GM12878 (cell line): ENCODE measurements at regions of chr1 and their contacts with region 1.

Region 1: DNA sequence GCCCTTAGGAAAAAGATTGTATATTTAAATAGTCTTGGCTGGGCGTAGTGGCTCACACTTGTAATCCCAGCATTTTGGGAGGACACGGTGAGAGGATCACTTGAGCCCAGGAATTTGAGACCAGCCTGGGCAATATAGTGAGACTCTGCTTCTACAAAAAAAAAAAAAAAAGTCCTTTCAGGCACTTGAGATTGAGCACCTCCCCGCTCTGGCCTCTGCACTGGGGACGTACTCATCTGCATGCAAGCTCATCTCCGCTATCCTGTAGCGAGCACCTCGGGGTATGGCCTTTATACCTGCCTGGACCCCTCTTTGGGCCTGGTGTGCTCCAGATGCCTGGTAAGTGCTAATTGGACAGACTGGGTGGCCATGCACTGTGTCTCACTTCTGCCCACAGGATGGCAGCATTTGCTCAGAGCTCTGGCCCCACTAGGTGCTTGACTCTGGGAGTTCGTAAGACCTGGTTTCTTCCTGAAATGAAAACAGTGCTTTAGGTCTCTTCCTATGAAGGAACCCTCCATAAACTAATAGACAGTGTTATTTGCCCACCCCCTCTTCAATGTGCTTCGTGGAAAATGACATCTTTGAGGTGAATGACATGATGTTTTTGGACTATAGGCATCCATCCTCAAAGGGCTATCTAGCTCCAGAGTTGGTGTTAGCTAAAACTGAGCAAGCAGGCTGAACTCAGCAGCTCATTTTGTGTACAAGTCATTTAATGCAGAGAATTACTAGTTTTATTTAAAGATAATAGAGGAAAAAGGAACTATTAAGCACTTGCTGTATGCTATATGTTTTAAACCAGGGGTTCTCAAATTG is 61.7 kb upstream of the ADAR start:
- DNase-seq: peak; percentile 67
- ATAC-seq: peak; percentile 100
- H3K4me3 ChIP-seq: no peak overlapping the region
- H3K27ac ChIP-seq: no peak overlapping the region
- H3K4me1 ChIP-seq: no peaks in the 10 kb centered on the region
- H3K27me3 ChIP-seq: no peaks in the 10 kb centered on the region
- CTCF ChIP-seq: peak; percentile 90 to 96 (median 93); a peak in 5 of 6 replicates
- EP300 ChIP-seq: no peak
- POLR2A ChIP-seq: no peak
- RAD21 ChIP-seq: peak; percentile 98

Region 2: DNA sequence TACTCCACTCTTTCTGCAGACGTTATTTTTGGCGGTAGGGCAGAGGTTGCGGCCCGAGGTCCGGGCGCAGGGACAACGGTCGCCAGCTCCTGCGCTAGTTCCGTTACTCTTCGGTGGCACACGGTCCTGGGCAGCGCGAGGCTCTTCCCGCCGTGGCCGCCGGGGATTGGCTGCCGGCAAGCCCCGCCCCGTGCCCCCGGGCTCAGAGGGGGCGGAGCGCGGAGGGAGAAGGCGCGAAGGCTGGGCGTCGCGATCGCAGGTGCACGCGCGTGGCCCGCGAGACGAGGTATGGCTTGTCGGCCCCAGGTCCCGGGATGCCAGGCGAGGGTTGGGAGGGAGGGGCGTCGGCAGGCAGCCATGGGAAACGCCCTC is 166.9 kb before region 1 on chr1:
- CTCF ChIA-PET with region 1: no interaction called
- POLR2A ChIA-PET with region 1: no interaction called
- RAD21 ChIA-PET with region 1: no interaction called
- SMC1A ChIA-PET with region 1: no interaction called
- in situ Hi-C with region 1: no loop called
- intact Hi-C with region 1: no loop called
- DNase-seq: no peak
- ATAC-seq: no peak
- H3K4me3 ChIP-seq: no peak overlapping the region
- H3K27ac ChIP-seq: no peak overlapping the region
- H3K4me1 ChIP-seq: no peaks in the 10 kb centered on the region
- H3K27me3 ChIP-seq: peaks cover 6 to 10% of the 10 kb centered on the region in 2 experiments
- CTCF ChIP-seq: no peak
- EP300 ChIP-seq: no peak
- POLR2A ChIP-seq: no peak
- RAD21 ChIP-seq: no peak

Region 3: DNA sequence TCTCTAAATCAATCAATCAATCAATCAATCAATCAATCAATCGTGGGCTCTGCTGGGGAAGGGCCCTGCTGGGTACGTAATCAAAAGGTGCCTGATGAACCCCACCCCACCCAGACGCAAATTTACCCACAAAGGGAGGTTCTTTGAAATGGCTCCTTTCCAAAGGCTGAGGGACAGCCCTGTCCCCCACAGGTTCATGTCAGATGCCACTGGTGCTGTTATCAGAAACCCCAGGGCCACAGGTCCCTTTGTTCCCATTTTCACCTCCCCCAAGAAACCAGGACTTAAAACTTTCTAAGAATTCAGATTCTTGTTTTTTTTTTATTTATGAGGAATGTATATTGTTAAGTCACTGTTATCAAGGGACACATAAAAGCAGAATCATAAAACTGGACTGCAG is 87.9 kb before region 1 on chr1:
- CTCF ChIA-PET with region 1: no interaction called
- POLR2A ChIA-PET with region 1: no interaction called
- RAD21 ChIA-PET with region 1: no interaction called
- SMC1A ChIA-PET with region 1: no interaction called
- in situ Hi-C with region 1: no loop called
- intact Hi-C with region 1: no loop called
- DNase-seq: no peak
- ATAC-seq: no peak
- H3K4me3 ChIP-seq: no peak overlapping the region
- H3K27ac ChIP-seq: no peak overlapping the region
- H3K4me1 ChIP-seq: peaks cover 12% of the 10 kb centered on the region
- H3K27me3 ChIP-seq: no peaks in the 10 kb centered on the region
- CTCF ChIP-seq: no peak
- EP300 ChIP-seq: no peak
- POLR2A ChIP-seq: no peak
- RAD21 ChIP-seq: no peak

Region 4: DNA sequence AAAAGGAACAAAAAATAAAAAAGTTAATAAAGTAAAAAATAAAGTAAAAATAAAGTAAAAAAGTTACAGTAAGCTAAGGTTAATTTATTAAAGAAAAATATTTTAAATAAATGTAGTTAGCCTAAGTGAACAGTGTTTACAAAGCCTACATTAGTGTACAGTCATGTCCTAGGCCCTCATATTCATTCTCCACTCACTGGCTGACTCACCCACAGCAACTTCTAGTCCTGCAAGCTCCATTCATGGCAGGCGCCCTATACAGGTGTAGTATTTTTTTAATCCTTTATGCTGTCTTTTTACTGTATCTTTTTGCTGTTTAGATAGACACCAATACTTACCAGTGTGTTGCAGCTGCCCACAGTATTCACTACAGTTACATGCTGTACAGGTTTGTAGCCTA is 74.1 kb before region 1 on chr1:
- CTCF ChIA-PET with region 1: no interaction called
- POLR2A ChIA-PET with region 1: no interaction called
- RAD21 ChIA-PET with region 1: no interaction called
- SMC1A ChIA-PET with region 1: interaction called, 11 read pairs
- in situ Hi-C with region 1: no loop called
- intact Hi-C with region 1: no loop called
- DNase-seq: no peak
- ATAC-seq: no peak
- H3K4me3 ChIP-seq: no peak overlapping the region
- H3K27ac ChIP-seq: no peak overlapping the region
- H3K4me1 ChIP-seq: no peaks in the 10 kb centered on the region
- H3K27me3 ChIP-seq: no peaks in the 10 kb centered on the region
- CTCF ChIP-seq: no peak
- EP300 ChIP-seq: no peak
- POLR2A ChIP-seq: no peak
- RAD21 ChIP-seq: no peak

Region 5: DNA sequence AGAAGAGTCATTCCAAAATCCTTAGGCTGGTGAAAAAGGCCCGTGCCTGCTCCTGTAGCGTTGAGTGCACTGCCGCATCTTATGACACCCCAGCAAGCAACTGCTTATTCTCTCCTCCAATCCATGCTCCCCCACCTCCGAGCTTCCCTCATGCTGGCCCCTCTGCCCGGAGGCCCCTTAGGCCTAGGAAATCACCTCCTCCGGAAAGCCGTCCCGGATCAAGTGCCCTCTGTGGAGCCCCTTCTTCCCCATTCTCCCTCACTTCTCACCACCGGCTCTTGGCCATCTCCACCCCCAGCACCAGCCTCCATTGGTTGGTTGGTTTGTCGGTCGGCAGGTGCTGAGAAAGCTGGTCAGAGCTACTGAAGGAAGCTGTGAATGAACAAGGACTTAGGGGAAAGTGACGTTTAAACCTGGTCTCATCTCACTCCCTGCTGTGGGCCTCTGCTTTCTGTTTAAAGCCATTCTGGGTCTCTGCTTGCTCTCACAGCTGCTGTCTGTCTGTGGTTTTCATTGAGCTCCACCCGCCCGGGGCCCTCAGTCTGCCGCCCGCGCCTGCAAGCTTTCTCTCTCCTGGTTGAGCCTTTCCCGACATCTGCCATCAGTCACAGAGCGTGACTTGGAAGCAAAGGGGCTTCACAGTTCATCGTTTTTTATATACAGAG is 78.2 kb after region 1 on chr1:
- CTCF ChIA-PET with region 1: interaction called, 10 read pairs
- POLR2A ChIA-PET with region 1: no interaction called
- RAD21 ChIA-PET with region 1: interaction called, 3 read pairs
- SMC1A ChIA-PET with region 1: interaction called, 11 read pairs
- in situ Hi-C with region 1: no loop called
- intact Hi-C with region 1: loop called (anchors 1 kb)
- DNase-seq: peak; percentile 66
- ATAC-seq: peak; percentile 89
- H3K4me3 ChIP-seq: peak overlapping the region; percentile 34; the same call in 1 of the 2 replicates
- H3K27ac ChIP-seq: peak overlapping the region; percentile 67
- H3K4me1 ChIP-seq: peaks cover 48% of the 10 kb centered on the region
- H3K27me3 ChIP-seq: no peaks in the 10 kb centered on the region
- CTCF ChIP-seq: no peak
- EP300 ChIP-seq: no peak
- POLR2A ChIP-seq: no peak
- RAD21 ChIP-seq: no peak

Region 6: GRCh38 chr1:154863315-154864174 is 193.9 kb after region 1 on chr1:
- CTCF ChIA-PET with region 1: interaction called, 11 read pairs
- POLR2A ChIA-PET with region 1: interaction called, 3 read pairs
- RAD21 ChIA-PET with region 1: interaction called, 12 read pairs
- SMC1A ChIA-PET with region 1: interaction called, 9 read pairs
- in situ Hi-C with region 1: no loop called
- intact Hi-C with region 1: no loop called
- DNase-seq: peak; percentile 85
- ATAC-seq: peak; percentile 39
- H3K4me3 ChIP-seq: peak overlapping the region; percentile 49; the same call in 1 of the 2 replicates
- H3K27ac ChIP-seq: peak overlapping the region; percentile 79
- H3K4me1 ChIP-seq: peaks cover 88% of the 10 kb centered on the region
- H3K27me3 ChIP-seq: no peaks in the 10 kb centered on the region
- CTCF ChIP-seq: peak; percentile 77 to 95 (median 88)
- EP300 ChIP-seq: peak; percentile 61 to 89; a peak in 2 of 4 replicates
- POLR2A ChIP-seq: peak; percentile 39; the same call in 1 of the 2 replicates
- RAD21 ChIP-seq: peak; percentile 70

Region 7: GRCh38 chr1:154884869-154885701 is 215.4 kb after region 1 on chr1:
- CTCF ChIA-PET with region 1: interaction called, 137 read pairs
- POLR2A ChIA-PET with region 1: interaction called, 3 read pairs
- RAD21 ChIA-PET with region 1: interaction called, 51 read pairs
- SMC1A ChIA-PET with region 1: interaction called, 113 read pairs
- in situ Hi-C with region 1: loop called (anchors 5 kb)
- intact Hi-C with region 1: no loop called
- DNase-seq: no peak
- ATAC-seq: no peak
- H3K4me3 ChIP-seq: no peak overlapping the region
- H3K27ac ChIP-seq: no peak overlapping the region
- H3K4me1 ChIP-seq: peaks cover 6% of the 10 kb centered on the region
- H3K27me3 ChIP-seq: no peaks in the 10 kb centered on the region
- CTCF ChIP-seq: no peak
- EP300 ChIP-seq: no peak
- POLR2A ChIP-seq: no peak
- RAD21 ChIP-seq: no peak

Region 8: GRCh38 chr1:155063550-155064110 is 394.0 kb after region 1 on chr1 and contains the start of gene EFNA4:
- CTCF ChIA-PET with region 1: interaction called, 11 read pairs
- POLR2A ChIA-PET with region 1: no interaction called
- RAD21 ChIA-PET with region 1: interaction called, 15 read pairs
- SMC1A ChIA-PET with region 1: interaction called, 15 read pairs
- in situ Hi-C with region 1: no loop called
- intact Hi-C with region 1: loop called (anchors 5 kb)
- DNase-seq: no peak
- ATAC-seq: peak; percentile 90
- H3K4me3 ChIP-seq: peak within 1 kb of the TSS; percentile 95
- H3K27ac ChIP-seq: peak within 1 kb of the TSS; percentile 51
- H3K4me1 ChIP-seq: peaks cover 16% of the 10 kb centered on the region
- H3K27me3 ChIP-seq: no peaks in the 10 kb centered on the region
- CTCF ChIP-seq: no peak
- EP300 ChIP-seq: no peak
- POLR2A ChIP-seq: peak; percentile 85
- RAD21 ChIP-seq: no peak
- polyA plus RNA-seq, gene EFNA4: 0.52 to 1.3 TPM